ENCODE measurements at regions of chr14 and their contacts with region 1.

Region 1: DNA sequence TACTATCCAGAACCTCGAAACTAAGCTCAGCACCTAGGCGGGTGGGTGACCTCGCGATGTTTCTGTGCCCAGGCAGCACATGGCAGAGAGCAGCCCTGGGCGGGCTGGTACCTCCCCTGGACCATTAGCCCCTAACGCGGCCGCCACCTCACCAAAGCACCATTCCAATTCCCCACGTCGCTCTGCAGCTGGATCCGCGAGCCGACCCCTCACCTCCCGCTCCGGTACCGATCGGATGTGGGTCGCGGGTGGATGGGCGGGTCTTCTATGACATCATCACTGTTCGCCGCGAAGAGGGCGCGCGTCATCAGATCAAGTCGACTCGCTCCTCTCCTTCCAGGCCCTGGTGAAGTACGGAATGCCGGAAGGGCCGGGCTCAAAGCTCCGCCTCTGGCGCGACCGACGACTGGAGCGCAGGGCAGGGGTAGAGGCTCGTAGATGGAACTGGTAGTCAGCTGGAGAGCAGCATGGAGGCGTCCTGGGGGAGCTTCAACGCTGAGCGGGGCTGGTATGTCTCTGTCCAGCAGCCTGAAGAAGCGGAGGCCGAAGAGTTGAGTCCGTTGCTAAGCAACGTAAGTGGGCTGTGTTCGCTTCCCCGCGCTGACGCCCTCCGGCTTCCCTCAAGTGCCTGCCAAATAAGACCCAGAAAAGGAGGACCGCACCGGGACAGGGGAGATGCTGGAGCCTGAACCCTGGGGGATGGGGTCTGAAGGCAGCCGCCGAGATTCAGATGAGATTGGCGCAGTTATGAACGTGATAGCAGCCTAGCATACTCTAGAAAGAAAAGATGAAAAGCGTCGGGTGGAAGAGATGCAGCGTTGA is at the starts of genes SLC38A6 and TRMT5:
- DNase-seq: peak; percentile 88
- H3K4me3 Mint-ChIP-seq: no peak within 1 kb of the TSS
- H3K27ac Mint-ChIP-seq: no peak within 1 kb of the TSS
- H3K4me1 Mint-ChIP-seq: peaks cover 17% of the 10 kb centered on the region
- H3K27me3 Mint-ChIP-seq: no peaks in the 10 kb centered on the region
- total RNA-seq, gene SLC38A6: 4.5 and 4.7 TPM in 2 replicates
- total RNA-seq, gene TRMT5: 17.4 and 19.2 TPM in 2 replicates

Region 2: DNA sequence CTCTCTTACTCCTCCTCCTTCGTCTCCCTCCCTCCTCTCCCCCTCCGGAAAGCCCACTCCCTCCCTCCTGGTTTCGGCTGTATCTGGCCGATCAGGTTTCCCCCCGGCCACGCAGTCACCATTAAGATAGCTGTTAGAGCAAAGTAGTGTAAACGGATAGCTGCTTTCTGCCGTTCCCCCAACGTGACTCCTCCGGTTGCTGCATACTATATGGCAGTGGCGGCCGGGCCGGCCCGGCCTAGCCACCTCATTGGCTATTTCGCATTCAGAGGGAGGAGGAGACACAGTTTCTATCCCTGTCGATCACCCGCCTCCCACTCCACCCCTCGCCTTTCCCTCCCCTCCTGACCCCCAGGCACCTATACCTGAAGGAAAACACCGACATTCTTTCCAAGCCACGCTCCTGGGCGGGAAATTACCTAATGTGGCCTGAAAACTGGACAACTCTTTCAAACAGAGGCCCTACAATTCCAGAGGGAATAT is 256.8 kb before region 1 on chr14 and contains the start of gene SIX4:
- intact Hi-C with region 1: loop called (anchors 2 kb)
- DNase-seq: no peak
- H3K4me3 Mint-ChIP-seq: peak within 1 kb of the TSS; percentile 91
- H3K27ac Mint-ChIP-seq: peak within 1 kb of the TSS; percentile 67
- H3K4me1 Mint-ChIP-seq: peaks cover 25% of the 10 kb centered on the region
- H3K27me3 Mint-ChIP-seq: peaks cover 75% of the 10 kb centered on the region
- total RNA-seq, gene SIX4: 0.57 and 1.1 TPM in 2 replicates

Region 3: GRCh38 chr14:60734465-60735242 is 246.4 kb before region 1 on chr14 and contains the start of gene MNAT1:
- intact Hi-C with region 1: loop called (anchors 1 kb)
- DNase-seq: peak; percentile 69
- H3K4me3 Mint-ChIP-seq: peak within 1 kb of the TSS; percentile 97
- H3K27ac Mint-ChIP-seq: peak within 1 kb of the TSS; percentile 87
- H3K4me1 Mint-ChIP-seq: peaks cover 27% of the 10 kb centered on the region
- H3K27me3 Mint-ChIP-seq: peaks cover 21% of the 10 kb centered on the region
- total RNA-seq, gene MNAT1: 45.1 and 51.2 TPM in 2 replicates

Region 4: DNA sequence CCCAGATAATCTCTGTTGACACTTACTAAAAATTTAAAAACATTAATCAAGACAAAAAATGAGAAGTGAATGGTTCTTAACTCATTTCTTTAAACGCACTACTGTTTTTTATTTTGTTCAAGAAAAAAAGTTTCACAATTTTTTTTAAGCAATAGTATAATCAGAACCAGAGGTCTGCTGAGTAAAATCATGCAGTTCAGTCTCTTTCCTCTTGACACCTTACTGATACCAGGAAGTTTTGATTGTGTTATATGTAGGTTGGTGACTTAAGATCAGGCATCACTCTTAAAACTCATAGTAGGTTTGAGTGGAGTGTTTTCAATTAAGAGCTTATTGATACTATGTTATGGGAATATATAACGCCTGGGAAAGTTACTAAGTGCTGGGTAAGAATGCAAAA is 121.5 kb before region 1 on chr14:
- intact Hi-C with region 1: loop called (anchors 5 kb)
- DNase-seq: no peak
- H3K4me3 Mint-ChIP-seq: no peak overlapping the region
- H3K27ac Mint-ChIP-seq: no peak overlapping the region
- H3K4me1 Mint-ChIP-seq: peaks cover 28% of the 10 kb centered on the region
- H3K27me3 Mint-ChIP-seq: peaks cover 2% of the 10 kb centered on the region

Region 5: DNA sequence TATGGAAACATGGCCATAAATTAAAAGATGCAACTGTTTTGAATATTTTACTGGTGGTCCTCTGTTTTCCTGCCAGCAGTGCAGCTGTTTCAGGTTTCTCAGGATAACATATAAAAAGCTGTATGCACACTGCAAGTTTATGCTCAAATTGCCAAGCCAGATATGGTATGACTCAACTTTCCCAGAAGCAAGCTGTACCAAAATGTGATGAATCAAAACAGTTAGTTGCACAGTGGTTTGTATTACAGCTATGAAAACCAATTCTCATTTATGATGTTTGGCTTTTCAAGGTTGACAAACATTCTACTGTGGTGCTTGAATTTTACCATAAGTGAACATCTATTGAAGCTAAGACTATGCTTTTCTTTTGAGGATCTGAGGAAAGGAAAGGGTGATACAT is 15.6 kb before region 1 on chr14:
- intact Hi-C with region 1: loop called (anchors 1 kb)
- DNase-seq: no peak
- H3K4me3 Mint-ChIP-seq: no peak overlapping the region
- H3K27ac Mint-ChIP-seq: no peak overlapping the region
- H3K4me1 Mint-ChIP-seq: peaks cover 16% of the 10 kb centered on the region
- H3K27me3 Mint-ChIP-seq: no peaks in the 10 kb centered on the region

Region 6: DNA sequence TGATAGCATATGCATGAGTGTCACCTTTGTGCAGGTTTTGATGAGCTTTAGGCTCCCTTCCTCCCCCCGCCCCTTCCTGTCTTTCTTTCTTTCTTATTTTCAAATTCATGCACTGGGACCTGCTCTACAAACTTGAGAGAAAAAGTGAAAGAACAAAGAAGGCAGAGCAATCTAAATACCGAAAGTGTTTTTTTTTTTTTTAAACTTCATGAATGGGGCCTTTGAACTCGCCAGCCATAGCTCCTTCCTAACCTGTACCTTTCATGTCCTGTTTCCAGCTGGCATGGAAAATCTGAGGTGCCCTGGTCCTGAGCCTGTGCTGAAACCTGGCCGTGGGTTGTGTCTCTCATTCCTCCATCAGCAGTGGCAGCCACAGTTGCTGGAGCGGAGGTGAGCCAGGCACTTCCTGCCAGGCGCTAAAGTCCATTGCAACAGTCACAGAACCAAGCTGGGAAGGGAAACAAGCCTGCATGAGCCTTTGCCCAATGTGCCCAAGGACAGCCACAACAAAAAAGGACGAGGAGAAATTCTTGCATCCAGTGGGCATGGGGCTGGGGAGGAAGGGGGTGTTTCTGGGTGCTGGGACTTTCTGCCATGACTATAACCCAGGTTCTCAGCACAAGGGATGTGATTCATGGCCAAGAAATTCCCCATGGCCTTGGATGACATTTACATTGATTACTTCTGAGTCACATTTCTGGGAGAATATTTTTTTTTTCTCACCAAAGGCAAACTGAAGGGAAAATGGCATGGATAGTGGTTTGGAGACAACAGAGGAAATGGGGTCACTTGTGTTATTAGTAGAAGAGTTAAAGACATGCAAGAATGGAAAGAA is 197.4 kb after region 1 on chr14:
- intact Hi-C with region 1: loop called (anchors 5 kb)
- DNase-seq: peak; percentile 27
- H3K4me3 Mint-ChIP-seq: peak overlapping the region; percentile 47
- H3K27ac Mint-ChIP-seq: peak overlapping the region; percentile 78
- H3K4me1 Mint-ChIP-seq: peaks cover 44% of the 10 kb centered on the region
- H3K27me3 Mint-ChIP-seq: peaks cover 2% of the 10 kb centered on the region